ENCODE measurements at regions of chr2 and their contacts with region 1.

Region 1: GRCh38 chr2:235746257-235747084 is 252.6 kb downstream of the AGAP1 start:
- DNase-seq: peak; percentile 61
- ATAC-seq: peak; percentile 72
- H3K4me3 Mint-ChIP-seq: no peak overlapping the region
- H3K27ac Mint-ChIP-seq: no peak overlapping the region
- H3K4me1 Mint-ChIP-seq: no peaks in the 10 kb centered on the region
- H3K27me3 Mint-ChIP-seq: peaks cover 3% of the 10 kb centered on the region

Region 2: GRCh38 chr2:235595422-235596010 is 151.0 kb before region 1 on chr2:
- CTCF ChIA-PET with region 1: interaction called, 31 read pairs
- DNase-seq: peak; percentile 57
- ATAC-seq: no peak
- H3K4me3 Mint-ChIP-seq: no peak overlapping the region
- H3K27ac Mint-ChIP-seq: no peak overlapping the region
- H3K4me1 Mint-ChIP-seq: no peaks in the 10 kb centered on the region
- H3K27me3 Mint-ChIP-seq: no peaks in the 10 kb centered on the region

Region 3: DNA sequence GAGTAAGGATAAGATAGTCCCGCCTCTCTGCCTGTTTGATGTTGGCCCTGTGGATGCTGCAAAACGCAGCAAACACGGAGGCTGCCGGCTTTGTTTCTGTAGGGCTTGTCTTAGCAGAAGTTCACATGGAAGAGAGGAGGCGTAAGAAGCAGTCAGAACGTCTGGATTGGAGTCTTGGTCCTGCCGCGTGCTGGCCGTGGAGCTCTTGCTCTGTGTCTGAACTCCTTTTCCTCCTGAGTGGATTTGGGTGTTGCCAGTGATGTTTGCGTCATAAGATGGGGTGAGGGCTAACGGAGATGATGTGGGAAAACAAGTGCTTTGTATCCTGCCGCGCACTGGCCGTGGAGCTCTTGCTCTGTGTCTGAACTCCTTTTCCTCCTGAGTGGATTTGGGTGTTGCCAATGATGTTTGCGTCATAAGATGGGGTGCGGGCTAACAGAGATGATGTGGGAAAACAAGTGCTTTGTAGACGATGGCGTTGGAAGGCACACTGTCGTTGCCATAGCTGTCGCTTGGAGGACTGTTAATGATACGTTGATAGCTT is 11.7 kb before region 1 on chr2:
- CTCF ChIA-PET with region 1: interaction called, 15 read pairs
- DNase-seq: no peak
- ATAC-seq: no peak
- H3K4me3 Mint-ChIP-seq: no peak overlapping the region
- H3K27ac Mint-ChIP-seq: no peak overlapping the region
- H3K4me1 Mint-ChIP-seq: no peaks in the 10 kb centered on the region
- H3K27me3 Mint-ChIP-seq: no peaks in the 10 kb centered on the region

Measured in activated CD8-positive, alpha-beta memory T cell treated with anti-CD3 and anti-CD28 coated beads, Interleukin-2, amount 10 ng/mL, durations not matched to agents 7 days and 5 days (primary cell).